ENCODE measurements at regions of chr5 and their contacts with region 1.

Region 1: GRCh38 chr5:172533399-172534228 is 79.3 kb upstream of the SH3PXD2B start:
- DNase-seq: peak; percentile 86
- H3K4me3 Mint-ChIP-seq: peak overlapping the region; percentile 60
- H3K27ac Mint-ChIP-seq: peak overlapping the region; percentile 93
- H3K4me1 Mint-ChIP-seq: peaks cover 27% of the 10 kb centered on the region
- H3K27me3 Mint-ChIP-seq: no peaks in the 10 kb centered on the region
- CTCF ChIP-seq: no peak

Region 2: GRCh38 chr5:172503925-172504700 is 29.5 kb before region 1 on chr5:
- CTCF ChIA-PET with region 1: interaction called, 3 read pairs
- POLR2A ChIA-PET with region 1: interaction called, 12 read pairs
- intact Hi-C with region 1: no loop called
- DNase-seq: peak; percentile 53
- H3K4me3 Mint-ChIP-seq: peak overlapping the region; percentile 9
- H3K27ac Mint-ChIP-seq: peak overlapping the region; percentile 77
- H3K4me1 Mint-ChIP-seq: peaks cover 23% of the 10 kb centered on the region
- H3K27me3 Mint-ChIP-seq: no peaks in the 10 kb centered on the region
- CTCF ChIP-seq: no peak

Region 3: GRCh38 chr5:172640822-172641358 is 107.3 kb after region 1 on chr5 and contains the start of gene NEURL1B:
- CTCF ChIA-PET with region 1: interaction called, 5 read pairs
- POLR2A ChIA-PET with region 1: interaction called, 10 read pairs
- intact Hi-C with region 1: no loop called
- DNase-seq: peak; percentile 89
- H3K4me3 Mint-ChIP-seq: peak within 1 kb of the TSS; percentile 59
- H3K27ac Mint-ChIP-seq: no peak within 1 kb of the TSS
- H3K4me1 Mint-ChIP-seq: peaks cover 45% of the 10 kb centered on the region
- H3K27me3 Mint-ChIP-seq: no peaks in the 10 kb centered on the region
- CTCF ChIP-seq: no peak
- total RNA-seq, gene NEURL1B: 4.8 and 7.6 TPM in 2 replicates

Measured in MCF 10A (cell line).